Psoas muscle (tissue), 8 donors: ENCODE measurements at regions of chr22 and their contacts with region 1.

Region 1: GRCh38 chr22:39490135-39490798 is 11.8 kb upstream of the MIEF1 start:
- DNase-seq: peak; percentile 83 to 91
- ATAC-seq: peak; percentile 95 to 99 (median 97)
- H3K4me3 ChIP-seq: no peak overlapping the region
- H3K27ac ChIP-seq: no peak overlapping the region
- H3K4me1 ChIP-seq: no peaks in the 10 kb centered on the region
- H3K27me3 ChIP-seq: no peaks in the 10 kb centered on the region
- CTCF ChIP-seq: no peak

Region 2: GRCh38 chr22:39405346-39406085 is 84.8 kb before region 1 on chr22:
- intact Hi-C with region 1: loop called in 1 of 2 experiments (anchors 10 kb)
- DNase-seq: peak; percentile 50 to 54
- ATAC-seq: peak in 3 of 4 donors; percentile 28 to 56 (median 48)
- H3K4me3 ChIP-seq: no peak overlapping the region
- H3K27ac ChIP-seq: no peak overlapping the region
- H3K4me1 ChIP-seq: peaks cover 42% of the 10 kb centered on the region
- H3K27me3 ChIP-seq: no peaks in the 10 kb centered on the region
- CTCF ChIP-seq: no peak